ENCODE measurements at regions of chr7 and their contacts with region 1.

Region 1: GRCh38 chr7:117715784-117716445 is 157.3 kb downstream of the CTTNBP2 start:
- DNase-seq: peak in 4 of 10 donors; percentile 19 to 51 (median 34)
- H3K4me3 ChIP-seq: no peak overlapping the region
- H3K27ac ChIP-seq: peak overlapping the region in 34 of 59 donors; percentile 0 to 73 (median 44)
- H3K27me3 ChIP-seq: no peaks in the 10 kb centered on the region
- CTCF ChIP-seq: peak in 54 of 56 donors; percentile 49 to 83 (median 68)

Region 2: DNA sequence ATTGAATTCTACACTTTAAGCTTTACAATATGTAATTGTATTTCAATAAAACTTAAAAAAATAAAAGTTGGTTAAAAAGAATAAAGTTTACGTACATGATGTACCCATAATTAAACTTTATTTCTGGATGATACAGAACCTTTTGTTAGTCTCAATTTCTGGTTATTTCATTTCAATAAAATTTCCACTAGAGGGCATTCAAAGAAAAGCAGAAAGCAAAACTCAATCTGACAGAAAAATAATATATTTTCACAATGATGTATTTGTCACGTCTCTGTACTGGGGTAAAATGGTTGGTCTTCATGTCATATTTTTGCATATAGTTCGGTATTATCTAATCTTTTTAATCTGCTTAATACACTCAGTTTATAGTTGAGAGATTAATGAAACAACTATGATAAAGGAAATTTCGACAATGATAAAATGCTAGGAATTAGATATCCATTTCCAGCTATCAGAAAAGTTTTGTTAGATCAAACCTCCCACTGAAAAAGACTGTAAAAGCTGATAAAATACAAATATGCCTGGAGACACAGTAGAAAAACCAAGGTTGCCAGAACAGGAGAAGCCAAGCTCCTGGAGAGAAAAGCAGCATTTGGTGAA is 316.0 kb before region 1 on chr7:
- intact Hi-C with region 1: loop called (anchors 5 kb)
- DNase-seq: no peak
- H3K4me3 ChIP-seq: no peak overlapping the region
- H3K27ac ChIP-seq: no peak overlapping the region
- H3K27me3 ChIP-seq: peaks cover 0 to 8% (median 0%) of the 10 kb centered on the region in 45 donors
- CTCF ChIP-seq: peak; percentile 48 to 80 (median 64)

Region 3: GRCh38 chr7:117458977-117459583 is 256.8 kb before region 1 on chr7:
- intact Hi-C with region 1: loop called (anchors 5 kb)
- DNase-seq: no peak
- H3K4me3 ChIP-seq: no peak overlapping the region
- H3K27ac ChIP-seq: no peak overlapping the region
- H3K27me3 ChIP-seq: no peaks in the 10 kb centered on the region
- CTCF ChIP-seq: peak; percentile 57 to 92 (median 76)

Region 4: DNA sequence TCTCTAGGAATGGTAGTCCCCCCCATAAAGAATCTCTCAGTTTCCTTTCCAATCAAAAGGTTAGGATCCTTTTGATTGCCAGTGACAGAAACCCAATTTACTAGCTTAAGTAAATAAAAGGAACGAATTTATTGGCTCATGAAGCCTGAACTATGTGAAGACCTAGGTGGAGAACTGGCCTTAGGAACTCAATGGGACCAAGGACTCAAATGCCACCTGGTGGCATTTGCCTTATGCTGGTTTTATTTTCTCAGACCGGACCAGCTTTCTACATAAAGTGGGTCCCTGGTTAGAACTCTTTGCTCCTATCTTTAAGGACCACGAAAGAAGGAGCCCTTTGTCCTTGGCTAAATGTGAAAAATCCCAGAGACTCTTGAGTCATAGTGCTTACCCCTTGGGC is 210.7 kb before region 1 on chr7:
- intact Hi-C with region 1: no loop called
- DNase-seq: no peak
- H3K4me3 ChIP-seq: no peak overlapping the region
- H3K27ac ChIP-seq: no peak overlapping the region
- H3K27me3 ChIP-seq: peaks cover 0 to 3% (median 0%) of the 10 kb centered on the region in 45 donors
- CTCF ChIP-seq: no peak

Measured in dorsolateral prefrontal cortex (tissue), 120 donors.